Panc1 (cell line): ENCODE measurements at regions of chr10 and their contacts with region 1.

Region 1: DNA sequence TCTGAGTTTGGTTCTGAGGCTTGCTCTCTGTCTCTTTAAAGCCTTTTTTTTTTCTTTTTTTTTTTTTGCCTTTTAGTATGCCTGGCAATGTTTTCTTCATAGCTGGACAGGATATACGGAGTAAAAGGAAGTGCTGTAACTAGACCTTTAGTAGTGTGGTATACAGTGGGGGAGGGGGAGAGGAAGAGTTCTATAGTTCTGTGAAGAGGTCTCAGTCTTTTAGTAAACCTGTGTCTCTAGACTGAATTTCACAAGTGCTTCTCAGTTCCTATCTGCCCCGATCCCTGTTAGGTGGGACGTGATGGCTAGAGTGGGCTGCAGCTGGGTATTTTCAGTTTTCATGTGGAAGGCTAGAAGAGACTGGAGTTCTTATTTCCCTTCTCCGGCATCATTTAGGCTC is 3.1 kb upstream of the ABCC2 start:
- DNase-seq: peak; percentile 75
- ATAC-seq: peak; percentile 80
- H3K4me3 ChIP-seq: peak overlapping the region; percentile 16 to 44
- H3K27ac ChIP-seq: peak overlapping the region; percentile 97
- H3K4me1 ChIP-seq: peaks cover 83% of the 10 kb centered on the region
- H3K27me3 ChIP-seq: no peaks in the 10 kb centered on the region
- CTCF ChIP-seq: no peak

Region 2: GRCh38 chr10:99647601-99648151 is 131.7 kb before region 1 on chr10:
- CTCF ChIA-PET with region 1: no interaction called
- POLR2A ChIA-PET with region 1: no interaction called
- in situ Hi-C with region 1: no loop called
- intact Hi-C with region 1: no loop called
- DNase-seq: no peak
- ATAC-seq: no peak
- H3K4me3 ChIP-seq: no peak overlapping the region
- H3K27ac ChIP-seq: no peak overlapping the region
- H3K4me1 ChIP-seq: no peaks in the 10 kb centered on the region
- H3K27me3 ChIP-seq: no peaks in the 10 kb centered on the region; the same call in 1 of the 2 replicates
- CTCF ChIP-seq: no peak

Region 3: GRCh38 chr10:99732033-99732912 is 47.1 kb before region 1 on chr10 and contains the starts of genes COX15 and CUTC:
- CTCF ChIA-PET with region 1: no interaction called
- POLR2A ChIA-PET with region 1: no interaction called
- in situ Hi-C with region 1: no loop called
- intact Hi-C with region 1: loop called (anchors 2 kb)
- DNase-seq: peak; percentile 91
- ATAC-seq: peak; percentile 96
- H3K4me3 ChIP-seq: peak within 1 kb of the TSS; percentile 92 to 93
- H3K27ac ChIP-seq: peak within 1 kb of the TSS; percentile 98
- H3K4me1 ChIP-seq: peaks cover 22% of the 10 kb centered on the region
- H3K27me3 ChIP-seq: no peaks in the 10 kb centered on the region
- CTCF ChIP-seq: peak; percentile 59
- total RNA-seq, gene COX15: 62.9 TPM
- total RNA-seq, gene CUTC: 37.0 TPM

Region 4: GRCh38 chr10:99799613-99800012 is 20.3 kb after region 1 on chr10:
- CTCF ChIA-PET with region 1: no interaction called
- POLR2A ChIA-PET with region 1: interaction called, 32 read pairs
- in situ Hi-C with region 1: no loop called
- intact Hi-C with region 1: no loop called
- DNase-seq: no peak
- ATAC-seq: peak; percentile 41; the same call in 1 of the 2 replicates
- H3K4me3 ChIP-seq: no peak overlapping the region
- H3K27ac ChIP-seq: no peak overlapping the region; the same call in 1 of the 2 replicates
- H3K4me1 ChIP-seq: no peaks in the 10 kb centered on the region
- H3K27me3 ChIP-seq: no peaks in the 10 kb centered on the region
- CTCF ChIP-seq: peak; percentile 34

Region 5: DNA sequence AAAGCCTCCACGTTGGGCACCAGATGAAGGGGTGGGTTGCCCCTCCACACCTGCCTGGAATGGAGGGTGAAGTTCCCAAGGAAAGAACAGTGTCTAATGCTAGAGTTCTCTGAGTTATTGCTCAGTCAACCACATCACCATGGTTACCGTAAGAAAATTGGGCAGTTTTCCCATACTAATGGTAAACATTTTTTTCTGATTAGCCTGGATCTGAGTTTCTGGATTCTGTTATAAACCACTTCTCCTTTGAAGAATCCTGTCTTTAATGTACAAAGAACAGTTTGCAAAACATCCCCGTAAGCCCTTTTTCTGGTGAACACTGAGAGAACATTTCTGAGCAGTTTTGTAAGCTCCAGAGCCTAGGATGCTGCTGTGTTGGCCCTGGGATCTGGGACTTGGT is 48.6 kb after region 1 on chr10:
- CTCF ChIA-PET with region 1: no interaction called
- POLR2A ChIA-PET with region 1: no interaction called
- in situ Hi-C with region 1: no loop called
- intact Hi-C with region 1: no loop called
- DNase-seq: no peak
- ATAC-seq: no peak
- H3K4me3 ChIP-seq: no peak overlapping the region
- H3K27ac ChIP-seq: no peak overlapping the region; the same call in 1 of the 2 replicates
- H3K4me1 ChIP-seq: no peaks in the 10 kb centered on the region
- H3K27me3 ChIP-seq: no peaks in the 10 kb centered on the region
- CTCF ChIP-seq: no peak

Region 6: DNA sequence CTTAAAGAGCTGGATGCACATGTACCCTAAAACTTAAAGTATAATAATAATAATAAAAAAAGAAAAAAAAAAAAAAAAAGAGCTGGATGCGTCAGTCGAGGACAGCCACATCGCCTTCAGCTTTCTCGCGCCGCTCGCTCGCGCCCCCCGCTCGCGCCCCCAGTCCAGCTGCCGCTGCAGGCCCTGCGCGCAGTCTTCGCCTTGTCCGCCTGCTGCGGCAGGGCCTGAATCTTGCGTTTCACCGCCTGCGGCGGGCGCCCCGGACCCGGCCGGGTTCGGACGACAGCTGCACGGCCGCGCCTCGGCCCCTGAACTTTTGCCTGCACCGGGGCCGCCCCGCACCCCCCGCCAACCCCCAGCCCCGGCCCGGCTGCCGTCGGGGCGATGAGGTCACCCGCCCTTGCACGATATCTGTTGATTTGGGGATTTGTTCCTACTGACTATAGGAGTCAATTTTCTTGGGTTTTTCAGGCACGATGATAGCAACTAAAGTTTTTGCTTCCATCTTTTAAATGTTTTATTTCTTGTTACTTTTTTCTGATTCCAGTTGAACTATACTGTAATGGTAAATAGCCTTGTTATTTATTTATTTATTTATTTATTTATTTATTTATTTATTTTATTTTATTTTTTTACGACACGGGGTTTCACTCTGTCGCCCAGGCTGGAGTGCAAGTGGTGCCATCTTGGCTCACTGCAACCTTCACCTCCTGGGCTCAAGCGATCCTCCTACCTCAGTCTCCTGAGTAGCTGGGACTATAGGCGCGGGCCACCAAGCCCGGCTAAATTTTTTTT is 335.8 kb after region 1 on chr10:
- CTCF ChIA-PET with region 1: no interaction called
- POLR2A ChIA-PET with region 1: no interaction called
- in situ Hi-C with region 1: no loop called
- intact Hi-C with region 1: no loop called
- DNase-seq: no peak
- ATAC-seq: no peak
- H3K4me3 ChIP-seq: no peak overlapping the region
- H3K27ac ChIP-seq: no peak overlapping the region
- H3K4me1 ChIP-seq: no peaks in the 10 kb centered on the region
- H3K27me3 ChIP-seq: no peaks in the 10 kb centered on the region
- CTCF ChIP-seq: no peak

Region 7: DNA sequence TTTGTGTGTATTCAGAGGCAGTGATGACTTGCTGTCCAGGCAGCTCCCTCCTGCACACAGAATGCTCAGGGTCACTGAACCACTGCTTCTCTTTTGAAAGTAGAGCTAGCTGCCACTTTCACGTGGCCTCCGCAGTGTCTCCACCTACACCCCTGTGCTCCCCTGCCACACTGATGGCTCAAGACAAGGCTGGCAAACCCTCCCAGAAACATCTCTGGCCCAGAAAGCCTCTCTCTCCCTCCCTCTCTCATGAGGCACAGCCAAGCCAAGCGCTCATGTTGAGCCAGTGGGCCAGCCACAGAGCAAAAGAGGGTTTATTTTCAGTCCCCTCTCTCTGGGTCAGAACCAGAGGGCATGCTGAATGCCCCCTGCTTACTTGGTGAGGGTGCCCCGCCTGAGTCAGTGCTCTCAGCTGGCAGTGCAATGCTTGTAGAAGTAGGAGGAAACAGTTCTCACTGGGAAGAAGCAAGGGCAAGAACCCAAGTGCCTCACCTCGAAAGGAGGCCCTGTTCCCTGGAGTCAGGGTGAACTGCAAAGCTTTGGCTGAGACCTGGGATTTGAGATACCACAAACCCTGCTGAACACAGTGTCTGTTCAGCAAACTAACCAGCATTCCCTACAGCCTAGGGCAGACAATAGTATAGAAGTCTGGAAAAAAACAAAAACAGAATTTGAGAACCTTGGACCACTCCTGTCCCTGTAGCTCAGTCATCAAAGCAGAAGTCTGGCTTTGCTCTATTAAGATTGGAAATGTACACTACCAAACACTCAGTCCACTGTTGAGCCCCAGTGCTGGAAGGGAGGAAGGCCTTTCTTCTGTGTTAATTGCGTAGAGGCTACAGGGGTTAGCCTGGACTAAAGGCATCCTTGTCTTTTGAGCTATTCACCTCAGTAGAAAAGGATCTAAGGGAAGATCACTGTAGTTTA is 583.5 kb after region 1 on chr10:
- CTCF ChIA-PET with region 1: no interaction called
- POLR2A ChIA-PET with region 1: no interaction called
- in situ Hi-C with region 1: no loop called
- intact Hi-C with region 1: no loop called
- DNase-seq: no peak
- ATAC-seq: peak; percentile 32
- H3K4me3 ChIP-seq: no peak overlapping the region
- H3K27ac ChIP-seq: peak overlapping the region; percentile 88
- H3K4me1 ChIP-seq: peaks cover 73% of the 10 kb centered on the region
- H3K27me3 ChIP-seq: no peaks in the 10 kb centered on the region
- CTCF ChIP-seq: no peak